Breast epithelium (tissue), 4 donors: ENCODE measurements at regions of chr2 and their contacts with region 1.

Region 1: GRCh38 chr2:12484536-12485115 is 232.1 kb upstream of the TRIB2 start:
- DNase-seq: no peak
- H3K4me3 ChIP-seq: no peak overlapping the region
- H3K27ac ChIP-seq: no peak overlapping the region
- H3K4me1 ChIP-seq: no peaks in the 10 kb centered on the region
- H3K27me3 ChIP-seq: no peaks in the 10 kb centered on the region
- CTCF ChIP-seq: no peak
- POLR2A ChIP-seq: no peak

Region 2: DNA sequence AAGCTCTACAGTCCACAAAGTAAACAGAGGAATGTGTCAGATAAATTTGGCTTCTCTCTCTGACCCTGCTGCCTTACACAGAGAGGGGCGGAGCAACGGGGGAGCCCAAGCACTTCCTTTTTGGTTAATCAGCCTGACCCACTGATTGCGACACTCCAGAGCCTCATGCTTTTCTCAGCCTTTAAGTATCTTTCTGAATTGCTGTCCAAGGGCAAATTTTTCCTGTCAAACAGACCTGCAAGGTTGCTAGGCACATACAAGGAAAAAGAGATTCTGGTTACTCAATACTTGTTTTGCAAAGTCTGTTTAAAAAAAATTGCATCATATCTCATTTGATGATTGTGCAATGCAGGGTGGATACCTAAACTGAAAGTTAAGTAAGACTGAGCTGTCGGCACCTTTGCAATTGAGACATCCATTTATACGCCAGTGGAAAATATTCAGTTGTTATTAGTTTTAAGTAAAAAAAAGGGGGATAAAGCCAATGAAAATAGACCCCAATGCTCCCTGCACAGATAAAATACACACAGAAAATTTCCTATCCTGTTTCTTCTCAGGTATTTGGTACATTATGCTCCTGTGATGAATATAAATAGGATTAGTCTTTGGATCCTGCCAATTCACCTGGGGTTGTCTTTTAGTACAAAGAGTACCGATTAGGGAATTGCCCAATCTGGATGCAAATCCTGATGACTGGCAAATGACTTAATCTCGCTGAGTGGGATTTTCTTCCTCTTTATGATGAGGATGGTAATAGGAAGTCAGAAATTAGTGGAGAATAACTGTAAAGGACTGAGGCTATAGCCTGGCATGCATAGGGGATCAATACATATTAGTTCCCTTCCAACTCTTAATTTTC is 28.1 kb before region 1 on chr2:
- intact Hi-C with region 1: loop called (anchors 1 kb)
- DNase-seq: peak; percentile 62 to 91
- H3K4me3 ChIP-seq: peak overlapping the region in 2 of 3 donors; percentile 28 to 50
- H3K27ac ChIP-seq: peak overlapping the region; percentile 73 to 88
- H3K4me1 ChIP-seq: peaks cover 0 to 6% of the 10 kb centered on the region in 2 donors
- H3K27me3 ChIP-seq: no peaks in the 10 kb centered on the region
- CTCF ChIP-seq: peak in 1 of 3 donors; percentile 54
- POLR2A ChIP-seq: no peak

Region 3: DNA sequence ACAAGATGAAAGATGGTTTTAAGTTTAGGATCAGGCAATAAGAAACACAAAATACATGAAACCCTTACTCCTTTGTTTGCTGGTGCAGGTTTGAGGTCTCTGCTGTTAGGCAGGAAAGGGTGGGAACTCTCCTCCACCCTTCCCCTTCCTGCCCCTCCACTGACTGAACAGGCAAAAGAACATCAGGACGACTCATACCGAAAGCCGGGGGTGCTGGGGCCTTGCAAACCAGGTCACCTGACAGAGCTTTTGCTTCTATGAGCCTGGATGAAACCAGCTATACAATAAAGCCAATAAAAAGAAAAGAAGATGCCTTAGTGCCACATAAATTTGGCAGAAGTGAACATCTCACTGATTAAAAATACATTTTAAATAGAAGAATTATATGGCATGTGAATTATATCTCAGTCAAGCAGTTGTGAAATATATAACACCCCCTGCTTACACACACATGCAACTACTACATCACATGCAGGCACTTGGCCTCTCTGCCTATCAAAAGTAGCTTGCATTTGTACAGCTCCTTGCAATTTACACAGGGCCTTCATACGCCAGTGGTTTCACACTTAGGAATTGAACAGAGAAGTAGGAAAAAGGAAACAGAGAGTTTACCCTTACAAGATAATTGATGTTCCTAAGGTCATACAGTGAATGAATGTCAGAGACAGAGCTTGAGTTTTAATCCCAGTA is 17.0 kb after region 1 on chr2:
- intact Hi-C with region 1: no loop called
- DNase-seq: no peak
- H3K4me3 ChIP-seq: no peak overlapping the region
- H3K27ac ChIP-seq: peak overlapping the region in 1 of 2 donors; percentile 38
- H3K4me1 ChIP-seq: no peaks in the 10 kb centered on the region
- H3K27me3 ChIP-seq: no peaks in the 10 kb centered on the region
- CTCF ChIP-seq: no peak
- POLR2A ChIP-seq: no peak

Region 4: DNA sequence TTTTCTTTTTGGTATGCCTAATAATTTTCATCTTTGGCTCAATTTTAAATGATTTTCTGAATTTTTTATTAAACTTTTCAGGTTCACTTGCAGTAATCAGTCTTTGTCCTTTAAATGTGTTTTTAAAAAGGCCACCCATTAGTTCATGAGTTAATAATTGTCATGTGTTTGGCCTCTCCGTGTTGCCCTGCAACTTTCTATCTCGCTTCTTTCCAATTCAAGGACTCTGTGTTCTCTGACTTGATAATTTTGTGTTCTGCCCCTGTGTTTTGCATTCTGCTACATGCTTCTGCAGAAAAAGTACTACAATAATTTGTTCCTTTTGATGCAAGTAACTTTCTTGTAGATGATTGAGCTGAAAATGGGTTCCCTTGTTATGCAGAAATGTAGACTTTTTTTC is 1226.5 kb after region 1 on chr2:
- intact Hi-C with region 1: no loop called
- DNase-seq: no peak
- H3K4me3 ChIP-seq: no peak overlapping the region
- H3K27ac ChIP-seq: no peak overlapping the region
- H3K4me1 ChIP-seq: no peaks in the 10 kb centered on the region
- H3K27me3 ChIP-seq: no peaks in the 10 kb centered on the region
- CTCF ChIP-seq: no peak
- POLR2A ChIP-seq: no peak